MCF 10A (cell line): ENCODE measurements at regions of chr2 and their contacts with region 1.

Region 1: DNA sequence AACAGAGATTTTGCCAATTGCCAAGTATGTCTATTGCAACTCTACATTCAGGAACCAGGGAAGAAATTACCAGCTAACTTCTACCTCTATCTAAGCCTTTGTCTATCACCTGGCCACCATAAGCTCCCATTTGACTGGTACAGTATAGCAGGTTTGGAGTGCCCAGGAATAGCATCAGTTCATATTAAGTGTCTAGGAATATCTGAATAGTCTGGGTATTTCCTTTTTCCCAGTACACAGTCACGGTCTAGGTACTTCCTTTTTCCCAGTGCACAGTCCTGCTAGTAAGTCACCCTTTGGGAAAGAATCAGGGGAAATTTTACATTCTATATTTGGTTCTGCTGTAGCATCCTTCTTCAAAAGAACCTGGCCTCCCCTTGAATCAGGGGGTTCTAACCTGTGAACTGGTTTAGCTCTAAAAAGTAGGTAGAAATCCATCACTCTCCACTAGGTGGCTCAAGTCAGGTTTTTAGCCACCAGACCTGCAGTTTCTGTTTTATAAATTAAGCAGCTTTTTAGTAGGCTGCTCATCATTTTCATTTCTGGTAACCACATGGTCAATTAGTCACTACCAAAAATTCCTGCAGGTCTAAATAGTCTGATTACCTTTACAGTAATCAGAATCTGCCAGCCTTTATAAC is 49.3 kb upstream of the DNAJC10 start:
- DNase-seq: peak; percentile 43
- H3K4me3 Mint-ChIP-seq: no peak overlapping the region
- H3K27ac Mint-ChIP-seq: no peak overlapping the region
- H3K4me1 Mint-ChIP-seq: no peaks in the 10 kb centered on the region
- H3K27me3 Mint-ChIP-seq: no peaks in the 10 kb centered on the region
- CTCF ChIP-seq: peak; percentile 51

Region 2: DNA sequence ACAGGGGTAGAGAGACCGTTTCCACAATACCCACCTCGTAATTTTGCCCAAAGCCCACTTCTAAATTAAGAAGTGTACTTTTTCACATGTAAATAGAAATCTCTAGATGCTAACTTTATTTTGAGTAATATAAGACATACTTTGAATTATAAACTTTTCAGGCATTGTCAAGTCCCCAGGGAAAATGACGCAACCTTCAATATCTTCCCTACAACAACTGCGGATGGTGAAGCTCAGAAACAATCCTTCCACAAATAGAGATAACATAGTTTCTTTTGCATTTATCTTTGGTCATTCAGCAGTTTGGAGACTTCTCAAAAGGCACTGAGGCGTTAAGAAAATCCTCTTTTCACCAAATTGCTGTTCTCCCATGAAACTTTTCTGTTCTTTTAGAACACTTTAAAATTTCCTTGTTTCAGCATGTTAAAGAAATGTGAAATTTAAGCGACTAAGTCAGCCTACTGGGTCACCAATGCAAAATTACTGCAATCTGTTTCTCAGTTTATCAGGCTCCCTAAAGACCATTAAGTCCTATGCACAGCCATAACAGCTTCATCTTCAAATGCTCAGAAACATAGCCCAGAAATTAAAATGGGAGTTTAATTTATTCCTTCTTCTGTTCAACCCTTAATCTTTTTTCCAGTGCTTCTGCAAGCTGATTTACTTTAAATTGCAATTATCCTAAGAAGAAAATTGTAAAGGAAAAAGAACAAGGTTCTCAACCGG is 69.1 kb before region 1 on chr2:
- CTCF ChIA-PET with region 1: no interaction called
- POLR2A ChIA-PET with region 1: no interaction called
- intact Hi-C with region 1: no loop called
- DNase-seq: no peak
- H3K4me3 Mint-ChIP-seq: no peak overlapping the region
- H3K27ac Mint-ChIP-seq: no peak overlapping the region
- H3K4me1 Mint-ChIP-seq: peaks cover 11% of the 10 kb centered on the region
- H3K27me3 Mint-ChIP-seq: no peaks in the 10 kb centered on the region
- CTCF ChIP-seq: no peak

Region 3: DNA sequence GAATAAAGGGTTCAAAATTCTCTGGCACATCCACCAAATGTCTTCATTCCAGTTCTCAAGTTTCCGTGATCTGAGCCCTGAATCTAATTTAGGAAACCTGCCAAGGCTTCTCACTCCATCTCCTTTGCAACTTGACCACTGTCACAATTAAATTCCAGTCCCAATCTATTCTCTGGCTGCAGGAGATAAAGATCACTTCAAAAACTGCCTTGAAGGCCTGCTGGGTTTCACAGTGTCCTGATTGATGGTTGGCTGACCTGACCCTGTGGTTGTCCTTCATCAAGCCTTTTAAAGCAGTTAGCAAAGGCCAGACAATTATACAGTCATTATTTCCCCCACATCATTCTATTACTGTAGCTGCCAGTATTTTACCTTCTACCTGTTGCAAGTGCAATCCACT is 11.0 kb before region 1 on chr2:
- CTCF ChIA-PET with region 1: interaction called, 16 read pairs
- POLR2A ChIA-PET with region 1: no interaction called
- intact Hi-C with region 1: no loop called
- DNase-seq: no peak
- H3K4me3 Mint-ChIP-seq: no peak overlapping the region
- H3K27ac Mint-ChIP-seq: no peak overlapping the region
- H3K4me1 Mint-ChIP-seq: no peaks in the 10 kb centered on the region
- H3K27me3 Mint-ChIP-seq: no peaks in the 10 kb centered on the region
- CTCF ChIP-seq: no peak

Region 4: GRCh38 chr2:182715896-182716668 is 49.3 kb after region 1 on chr2 and contains the start of gene DNAJC10:
- CTCF ChIA-PET with region 1: interaction called, 5 read pairs
- POLR2A ChIA-PET with region 1: interaction called, 7 read pairs
- intact Hi-C with region 1: loop called (anchors 1 kb)
- DNase-seq: peak; percentile 85
- H3K4me3 Mint-ChIP-seq: no peak within 1 kb of the TSS
- H3K27ac Mint-ChIP-seq: no peak within 1 kb of the TSS
- H3K4me1 Mint-ChIP-seq: peaks cover 13% of the 10 kb centered on the region
- H3K27me3 Mint-ChIP-seq: no peaks in the 10 kb centered on the region
- CTCF ChIP-seq: no peak
- total RNA-seq, gene DNAJC10: 204 and 281 TPM in 2 replicates

Region 5: GRCh38 chr2:183093857-183094657 is 427.3 kb after region 1 on chr2:
- CTCF ChIA-PET with region 1: no interaction called
- POLR2A ChIA-PET with region 1: no interaction called
- intact Hi-C with region 1: loop called (anchors 5 kb)
- DNase-seq: peak; percentile 47
- H3K4me3 Mint-ChIP-seq: no peak overlapping the region
- H3K27ac Mint-ChIP-seq: no peak overlapping the region
- H3K4me1 Mint-ChIP-seq: peaks cover 5% of the 10 kb centered on the region
- H3K27me3 Mint-ChIP-seq: no peaks in the 10 kb centered on the region
- CTCF ChIP-seq: peak; percentile 27